Right ventricle myocardium inferior (tissue), 1 donor: ENCODE measurements at regions of chr10 and their contacts with region 1.

Region 1: DNA sequence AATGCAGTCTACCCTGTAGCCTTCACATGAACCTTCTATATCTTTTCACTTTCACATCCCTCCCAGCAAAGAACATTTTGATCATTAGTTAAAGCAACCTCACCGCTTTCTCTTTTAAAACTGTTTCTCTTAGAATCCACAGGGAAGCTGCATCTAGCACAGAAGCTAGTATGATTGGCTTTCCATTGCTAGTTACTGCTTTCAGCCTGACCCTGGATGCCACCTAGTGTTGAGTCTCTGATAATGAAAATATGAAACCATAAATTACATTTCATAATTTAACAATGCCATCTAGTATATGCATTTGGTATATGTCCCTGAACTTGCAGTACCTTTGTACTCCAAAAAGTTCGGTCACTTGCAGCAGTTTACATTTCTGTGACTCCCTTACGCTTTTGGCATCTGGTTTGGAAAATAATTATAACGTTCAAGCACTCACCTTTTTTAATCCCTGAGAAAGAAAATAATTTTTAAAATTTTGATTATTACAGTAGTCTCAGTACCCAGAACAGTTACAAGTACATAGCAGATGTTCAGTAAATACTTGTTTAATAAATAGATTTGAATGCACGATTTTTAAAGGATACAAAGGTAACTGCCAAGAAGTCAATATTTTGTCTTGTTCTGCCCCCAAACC is 22.7 kb downstream of the CISD1 start:
- DNase-seq: no peak
- ATAC-seq: peak; percentile 52

Region 2: GRCh38 chr10:57638411-57638810 is 653.2 kb before region 1 on chr10:
- intact Hi-C with region 1: no loop called
- DNase-seq: no peak
- ATAC-seq: no peak

Region 3: GRCh38 chr10:58177362-58177947 is 114.2 kb before region 1 on chr10:
- intact Hi-C with region 1: loop called (anchors 2 kb)
- DNase-seq: no peak
- ATAC-seq: no peak